ENCODE measurements at regions of chr2 and their contacts with region 1.

Region 1: GRCh38 chr2:71299507-71299906 is 32.1 kb upstream of the ZNF638 start:
- DNase-seq: peak in 2 of 35 experiments; percentile 13 to 65
- ATAC-seq: no peak
- H3K4me3 ChIP-seq: no peak overlapping the region
- H3K4me3 Mint-ChIP-seq: no peak overlapping the region
- H3K27ac ChIP-seq: no peak overlapping the region
- H3K27ac Mint-ChIP-seq: no peak overlapping the region
- H3K4me1 ChIP-seq: no peaks in the 10 kb centered on the region
- H3K4me1 Mint-ChIP-seq: no peaks in the 10 kb centered on the region
- H3K27me3 ChIP-seq: peaks cover 0 to 8% of the 10 kb centered on the region in 2 experiments
- H3K27me3 Mint-ChIP-seq: peaks cover 4 to 5% of the 10 kb centered on the region in 2 donors

Region 2: GRCh38 chr2:71498261-71498701 is 198.8 kb after region 1 on chr2:
- CTCF ChIA-PET with region 1: no interaction called
- POLR2A ChIA-PET with region 1: no interaction called
- DNase-seq: no peak
- ATAC-seq: no peak
- H3K4me3 ChIP-seq: no peak overlapping the region
- H3K4me3 Mint-ChIP-seq: no peak overlapping the region
- H3K27ac ChIP-seq: no peak overlapping the region
- H3K27ac Mint-ChIP-seq: no peak overlapping the region
- H3K4me1 ChIP-seq: no peaks in the 10 kb centered on the region
- H3K4me1 Mint-ChIP-seq: no peaks in the 10 kb centered on the region
- H3K27me3 ChIP-seq: peaks cover 0 to 25% of the 10 kb centered on the region in 2 experiments
- H3K27me3 Mint-ChIP-seq: peaks cover 3 to 5% of the 10 kb centered on the region in 2 donors

Region 3: DNA sequence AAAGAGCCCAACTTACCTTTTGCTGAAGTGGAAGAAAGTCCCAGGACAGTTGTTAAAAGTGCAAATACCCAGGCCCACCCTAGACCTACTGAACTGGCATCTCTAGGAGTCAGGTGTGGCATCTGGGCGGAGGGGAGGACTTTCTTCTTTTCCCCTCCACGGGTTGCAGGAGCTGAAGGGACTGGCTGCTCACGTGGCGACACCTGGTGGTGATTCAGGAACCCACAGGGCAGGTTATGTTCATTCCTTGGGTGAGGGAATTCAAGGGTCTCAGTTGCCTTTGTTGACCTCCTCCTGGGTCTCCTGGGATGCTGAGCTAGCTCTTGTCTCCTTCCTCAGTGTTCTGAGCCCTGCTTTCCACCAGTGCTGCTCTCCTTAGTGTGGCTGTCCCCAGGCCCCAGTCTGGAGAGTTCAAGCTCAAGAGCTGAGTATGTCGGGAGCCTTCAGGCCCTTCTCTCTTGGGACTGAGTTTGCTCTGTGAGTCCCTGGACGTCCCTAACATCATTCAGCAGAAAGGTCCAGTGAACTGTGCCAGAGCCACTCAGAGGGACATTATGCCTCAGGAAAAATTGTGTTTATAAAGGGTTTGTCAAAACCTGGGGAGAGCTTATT is 210.8 kb after region 1 on chr2:
- CTCF ChIA-PET with region 1: interaction called, 82 to 166 read pairs
- POLR2A ChIA-PET with region 1: interaction called in 1 of 2 experiments, 3 read pairs
- DNase-seq: peak; percentile 26 to 82 (median 62)
- ATAC-seq: peak; percentile 46 to 65 (median 54)
- H3K4me3 ChIP-seq: no peak overlapping the region
- H3K4me3 Mint-ChIP-seq: no peak overlapping the region
- H3K27ac ChIP-seq: no peak overlapping the region
- H3K27ac Mint-ChIP-seq: no peak overlapping the region
- H3K4me1 ChIP-seq: no peaks in the 10 kb centered on the region
- H3K4me1 Mint-ChIP-seq: peaks cover 0 to 5% (median 3%) of the 10 kb centered on the region in 3 donors
- H3K27me3 ChIP-seq: peaks cover 0 to 16% of the 10 kb centered on the region in 2 experiments
- H3K27me3 Mint-ChIP-seq: peaks cover 7 to 10% of the 10 kb centered on the region in 2 donors

Region 4: DNA sequence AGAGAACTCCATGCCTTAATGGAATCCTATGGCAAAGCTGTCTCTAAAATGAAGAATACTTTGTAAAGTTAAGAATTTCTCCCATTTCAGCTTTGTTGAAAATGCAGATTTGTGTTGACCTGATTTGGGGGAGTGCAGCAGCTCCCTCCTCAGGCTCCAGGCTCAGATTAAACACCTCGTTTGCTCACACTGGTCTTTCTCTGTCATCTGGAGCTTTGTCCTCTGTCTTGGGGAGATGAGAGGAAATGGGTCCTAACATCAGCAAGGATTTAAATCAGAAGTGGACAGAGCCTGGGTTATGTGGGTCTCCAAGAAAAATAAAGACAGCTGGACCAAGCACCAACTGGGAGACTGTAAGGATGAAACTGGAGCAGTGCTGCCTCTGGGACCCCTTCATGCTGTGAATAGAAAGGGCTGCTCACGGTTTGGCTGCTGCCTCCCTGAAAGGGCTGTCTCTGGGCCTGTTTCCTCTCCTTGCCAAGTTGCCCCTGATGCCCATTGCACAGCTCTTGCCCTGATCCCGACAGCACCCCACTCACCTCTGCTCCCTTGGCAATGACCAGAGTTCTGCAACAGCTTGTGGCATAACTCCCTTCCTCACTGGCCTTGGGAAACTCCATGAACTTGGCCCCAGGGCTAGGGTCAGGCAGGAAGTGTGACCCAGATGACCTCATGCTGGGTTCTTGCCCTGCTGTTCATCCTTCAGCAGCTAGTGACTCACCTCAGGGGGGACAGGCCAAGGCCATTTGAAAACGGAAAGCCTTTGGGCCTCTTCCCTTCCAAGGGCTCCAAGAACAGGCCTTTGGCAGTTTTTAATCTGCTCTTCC is 651.0 kb after region 1 on chr2:
- CTCF ChIA-PET with region 1: no interaction called
- POLR2A ChIA-PET with region 1: no interaction called
- DNase-seq: no peak
- ATAC-seq: peak in 1 of 4 experiments; percentile 30
- H3K4me3 ChIP-seq: no peak overlapping the region
- H3K4me3 Mint-ChIP-seq: no peak overlapping the region
- H3K27ac ChIP-seq: no peak overlapping the region
- H3K27ac Mint-ChIP-seq: no peak overlapping the region
- H3K4me1 ChIP-seq: no peaks in the 10 kb centered on the region
- H3K4me1 Mint-ChIP-seq: no peaks in the 10 kb centered on the region
- H3K27me3 ChIP-seq: no peaks in the 10 kb centered on the region
- H3K27me3 Mint-ChIP-seq: peaks cover 4 to 10% of the 10 kb centered on the region in 2 donors

Region 5: DNA sequence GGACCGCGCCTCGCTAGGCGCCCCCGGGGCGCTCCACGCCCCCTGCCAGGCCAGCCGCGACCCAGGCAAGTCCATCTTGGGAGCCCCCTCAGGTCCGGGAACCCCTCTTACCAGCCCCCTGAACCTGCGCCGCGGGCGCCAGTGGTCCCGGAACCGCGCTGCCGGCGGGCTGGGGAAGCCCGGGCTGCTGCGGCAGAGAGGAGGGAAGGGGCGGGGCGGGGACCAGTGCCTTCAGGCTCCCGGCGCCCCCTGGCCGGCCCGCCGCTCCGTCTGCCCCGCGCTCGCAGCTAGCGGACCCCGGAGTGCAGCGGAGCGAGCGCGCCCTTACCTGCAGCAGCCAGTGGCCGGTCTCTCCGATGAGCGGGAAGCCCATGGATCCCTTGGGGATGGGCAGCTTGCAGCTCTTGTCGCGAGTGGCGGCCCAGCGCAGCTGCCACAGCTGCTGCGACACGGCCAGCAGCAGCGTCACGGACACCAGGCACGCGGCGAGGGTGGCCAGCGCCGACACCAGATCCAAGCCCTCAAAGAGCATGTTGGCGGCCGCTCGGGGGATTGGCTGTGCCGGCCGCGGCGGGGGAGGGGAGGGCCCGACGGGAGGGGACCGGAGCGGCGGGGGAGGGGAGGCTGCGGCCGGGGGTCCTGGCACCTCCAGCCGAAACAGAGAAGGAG is 847.9 kb after region 1 on chr2 and contains the start of gene CYP26B1:
- CTCF ChIA-PET with region 1: interaction called, 3 to 14 read pairs
- POLR2A ChIA-PET with region 1: no interaction called
- DNase-seq: peak in 2 of 35 experiments; percentile 0 to 23
- ATAC-seq: no peak
- H3K4me3 ChIP-seq: peak within 1 kb of the TSS; percentile 19 to 27
- H3K4me3 Mint-ChIP-seq: peak within 1 kb of the TSS; percentile 75 to 93 (median 77)
- H3K27ac ChIP-seq: no peak within 1 kb of the TSS
- H3K27ac Mint-ChIP-seq: peak within 1 kb of the TSS in 1 of 2 donors; percentile 15
- H3K4me1 ChIP-seq: peaks cover 3 to 64% of the 10 kb centered on the region in 2 experiments
- H3K4me1 Mint-ChIP-seq: peaks cover 42 to 53% (median 48%) of the 10 kb centered on the region in 3 donors
- H3K27me3 ChIP-seq: peaks cover 6 to 92% of the 10 kb centered on the region in 2 experiments
- H3K27me3 Mint-ChIP-seq: peaks cover 57 to 76% of the 10 kb centered on the region in 2 donors
- total RNA-seq, gene CYP26B1: 0.06 TPM in 1 of 5 donors, not detected in the others